CD8-positive, alpha-beta memory T cell (primary cell): ENCODE measurements at regions of chr2 and their contacts with region 1.

Region 1: DNA sequence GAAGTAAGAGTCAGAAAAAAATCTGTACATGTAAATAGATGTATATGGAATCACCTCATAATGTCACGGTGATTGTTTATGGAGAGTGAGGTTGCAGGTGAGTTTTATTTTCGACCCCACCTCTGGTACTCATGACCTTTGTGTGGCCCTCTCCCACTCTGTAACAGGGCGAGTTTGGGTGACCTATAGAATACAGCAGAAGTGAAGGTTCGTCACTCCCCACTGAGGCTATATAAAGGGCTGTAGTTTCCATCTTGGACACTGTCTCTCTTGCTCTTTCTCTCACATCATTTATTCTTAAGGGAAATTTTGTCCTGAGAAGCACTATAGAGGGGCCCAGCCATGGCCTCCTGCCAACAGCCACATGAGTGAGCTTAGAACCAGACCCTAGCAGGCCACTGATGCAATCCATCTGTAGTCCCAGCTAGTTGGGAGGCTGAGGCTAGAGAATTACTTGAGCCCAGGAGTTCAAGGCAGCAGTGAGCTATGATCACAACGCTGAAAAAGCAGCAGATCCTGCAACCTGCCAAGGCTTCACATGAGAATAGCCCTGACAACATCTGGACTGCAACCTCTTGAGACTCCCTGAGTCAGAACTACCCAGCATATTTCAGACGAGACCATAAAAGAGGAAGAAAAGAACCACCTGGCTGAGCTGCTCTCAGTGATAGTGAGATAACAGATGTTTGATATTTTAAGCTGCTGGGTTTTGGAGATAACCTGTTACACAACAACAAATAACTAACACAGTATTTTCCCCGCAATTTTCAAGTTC is 74.3 kb upstream of the SLC1A4 start:
- DNase-seq: no peak
- H3K4me3 ChIP-seq: no peak overlapping the region
- H3K4me3 Mint-ChIP-seq: no peak overlapping the region
- H3K27ac ChIP-seq: no peak overlapping the region
- H3K27ac Mint-ChIP-seq: peak overlapping the region in 1 of 8 donors; percentile 66
- H3K4me1 ChIP-seq: peaks cover 12% of the 10 kb centered on the region
- H3K4me1 Mint-ChIP-seq: peaks cover 7 to 19% (median 16%) of the 10 kb centered on the region in 3 donors
- H3K27me3 ChIP-seq: no peaks in the 10 kb centered on the region
- H3K27me3 Mint-ChIP-seq: no peaks in the 10 kb centered on the region

Region 2: DNA sequence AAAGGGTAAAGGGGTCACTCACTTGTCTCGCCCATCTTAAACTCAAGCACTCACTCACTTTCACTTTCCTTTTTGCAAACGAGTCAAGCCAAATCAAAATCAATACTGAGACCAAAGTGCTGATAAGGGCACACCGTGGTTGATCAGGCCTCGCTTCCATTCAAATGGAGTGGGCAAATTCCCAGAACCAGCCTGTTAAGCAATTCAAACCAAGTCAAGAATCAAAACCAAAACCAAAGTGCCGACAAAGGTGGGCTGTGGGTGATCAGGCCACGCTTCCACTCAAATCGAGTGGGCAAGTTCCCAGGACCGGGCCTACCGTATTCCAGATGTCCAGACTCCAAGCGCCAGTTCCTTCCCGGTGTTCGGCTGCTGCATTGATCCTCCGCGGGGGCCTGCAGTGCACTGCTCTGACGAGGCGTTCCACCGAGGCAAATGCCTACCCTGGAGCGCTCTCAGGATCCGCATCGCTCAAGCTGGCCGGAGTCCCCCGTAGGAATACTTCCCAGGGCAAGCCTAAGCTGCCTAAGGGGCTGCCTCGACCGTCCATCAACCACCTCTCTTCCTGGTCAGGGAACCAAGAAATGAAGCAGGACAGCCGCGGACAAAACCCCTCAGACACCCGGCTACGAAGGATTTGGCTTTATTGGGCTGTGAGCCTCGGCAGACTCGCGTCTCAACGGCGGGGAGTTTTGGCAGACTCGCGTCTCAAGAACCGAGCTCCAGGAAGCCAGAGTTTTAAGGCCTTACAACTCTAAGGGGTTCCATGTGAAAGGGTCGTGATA is 15.6 kb before region 1 on chr2:
- CTCF ChIA-PET with region 1: no interaction called
- POLR2A ChIA-PET with region 1: no interaction called
- DNase-seq: no peak
- H3K4me3 ChIP-seq: no peak overlapping the region
- H3K4me3 Mint-ChIP-seq: peak overlapping the region in 6 of 7 donors; percentile 32 to 79 (median 45)
- H3K27ac ChIP-seq: no peak overlapping the region
- H3K27ac Mint-ChIP-seq: peak overlapping the region in 3 of 8 donors; percentile 5 to 69 (median 60)
- H3K4me1 ChIP-seq: no peaks in the 10 kb centered on the region
- H3K4me1 Mint-ChIP-seq: peaks cover 7 to 8% (median 8%) of the 10 kb centered on the region in 3 donors
- H3K27me3 ChIP-seq: no peaks in the 10 kb centered on the region
- H3K27me3 Mint-ChIP-seq: peaks cover 2 to 9% of the 10 kb centered on the region in 2 donors

Region 3: DNA sequence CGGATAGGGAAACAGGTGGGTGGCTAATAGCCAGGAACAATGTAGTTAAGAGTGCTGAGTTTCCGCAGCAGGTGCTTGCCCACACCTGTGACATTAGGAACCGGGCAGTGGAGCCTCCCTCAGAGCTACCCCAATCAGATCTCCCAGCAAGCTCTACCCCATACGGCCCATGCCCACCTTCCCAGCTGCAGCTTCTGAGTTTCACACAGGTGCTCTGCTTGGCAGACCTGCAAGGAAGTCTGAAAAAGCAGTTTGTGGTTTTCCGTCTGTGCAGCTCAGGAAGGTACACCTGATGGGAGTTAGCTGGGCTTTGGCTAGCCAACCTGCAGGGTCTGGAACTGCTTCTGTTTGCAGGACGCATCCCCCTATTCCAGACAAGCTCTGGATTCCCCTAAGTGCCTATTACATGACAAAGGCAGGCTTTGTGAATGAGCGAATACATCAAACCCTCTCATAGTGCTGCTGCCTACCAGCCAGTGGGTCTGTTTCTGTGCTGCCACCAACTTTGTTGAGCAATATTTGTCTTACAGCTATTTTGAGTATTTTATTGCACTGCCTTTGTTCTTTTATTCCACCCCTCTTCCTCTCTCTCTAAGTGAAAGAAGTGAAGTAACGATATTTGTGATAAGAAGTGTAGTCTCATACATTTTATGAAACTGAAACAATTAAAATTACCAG is 116.6 kb after region 1 on chr2:
- CTCF ChIA-PET with region 1: interaction called, 22 read pairs
- POLR2A ChIA-PET with region 1: interaction called, 3 read pairs
- DNase-seq: peak in 1 of 5 donors; percentile 24
- H3K4me3 ChIP-seq: peak overlapping the region; percentile 22
- H3K4me3 Mint-ChIP-seq: peak overlapping the region in 5 of 7 donors; percentile 18 to 70 (median 66)
- H3K27ac ChIP-seq: no peak overlapping the region
- H3K27ac Mint-ChIP-seq: peak overlapping the region in 7 of 8 donors; percentile 13 to 88 (median 49)
- H3K4me1 ChIP-seq: peaks cover 26% of the 10 kb centered on the region
- H3K4me1 Mint-ChIP-seq: peaks cover 21 to 25% (median 23%) of the 10 kb centered on the region in 3 donors
- H3K27me3 ChIP-seq: no peaks in the 10 kb centered on the region
- H3K27me3 Mint-ChIP-seq: no peaks in the 10 kb centered on the region

Region 4: GRCh38 chr2:65040400-65041261 is 125.7 kb after region 1 on chr2:
- CTCF ChIA-PET with region 1: interaction called, 32 read pairs
- POLR2A ChIA-PET with region 1: no interaction called
- DNase-seq: peak; percentile 61 to 80 (median 66)
- H3K4me3 ChIP-seq: no peak overlapping the region
- H3K4me3 Mint-ChIP-seq: peak overlapping the region in 4 of 7 donors; percentile 32 to 55 (median 44)
- H3K27ac ChIP-seq: no peak overlapping the region
- H3K27ac Mint-ChIP-seq: peak overlapping the region in 2 of 8 donors; percentile 38 to 39
- H3K4me1 ChIP-seq: peaks cover 4% of the 10 kb centered on the region
- H3K4me1 Mint-ChIP-seq: peaks cover 7 to 12% (median 9%) of the 10 kb centered on the region in 3 donors
- H3K27me3 ChIP-seq: no peaks in the 10 kb centered on the region
- H3K27me3 Mint-ChIP-seq: no peaks in the 10 kb centered on the region

Region 5: DNA sequence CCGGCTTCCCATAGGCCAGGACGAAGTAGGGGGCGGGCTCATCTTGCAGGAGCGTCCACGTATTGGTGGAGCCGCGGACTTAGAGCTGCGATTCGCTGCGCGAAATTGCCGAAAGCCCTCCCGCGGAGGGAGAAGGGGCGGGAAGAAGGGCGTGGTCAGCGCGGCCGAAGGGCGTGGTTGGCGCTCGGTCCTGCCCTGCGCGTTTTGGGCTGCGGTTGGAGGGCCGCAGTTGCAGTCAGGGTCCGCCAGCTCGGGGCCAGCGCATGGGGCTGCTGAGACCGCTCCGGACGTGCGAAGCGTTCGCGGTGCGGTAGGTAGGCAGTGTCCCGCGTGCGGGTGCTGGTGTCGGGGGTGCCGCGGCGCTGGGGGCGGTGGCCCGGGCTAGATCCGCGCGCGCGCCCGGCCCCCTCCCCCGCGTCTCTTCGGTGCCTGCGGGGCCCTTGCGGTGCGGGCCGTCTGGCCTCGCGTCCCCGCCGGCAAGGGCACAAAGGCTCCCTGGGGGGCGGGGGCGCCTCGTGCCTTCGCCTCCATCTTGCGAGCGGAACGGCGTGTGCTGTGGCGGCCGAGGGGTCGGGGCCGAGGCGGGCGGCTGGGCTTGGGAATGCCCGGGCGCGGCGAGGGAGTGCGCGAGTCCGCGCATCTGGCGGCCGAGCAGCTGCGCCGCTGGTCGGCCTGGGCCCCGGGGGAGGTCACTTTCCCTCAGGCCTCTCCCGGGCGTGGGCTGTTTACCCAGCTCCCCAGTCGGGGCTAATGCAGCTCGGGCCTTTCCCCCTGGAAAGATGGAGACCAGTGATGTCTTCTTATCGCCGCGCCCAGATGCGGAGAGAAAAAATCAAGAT is 141.5 kb after region 1 on chr2 and contains the start of gene CEP68:
- CTCF ChIA-PET with region 1: interaction called, 25 read pairs
- POLR2A ChIA-PET with region 1: no interaction called
- DNase-seq: peak; percentile 93 to 97 (median 95)
- H3K4me3 ChIP-seq: peak within 1 kb of the TSS; percentile 65
- H3K4me3 Mint-ChIP-seq: peak within 1 kb of the TSS; percentile 85 to 98 (median 97)
- H3K27ac ChIP-seq: peak within 1 kb of the TSS; percentile 55
- H3K27ac Mint-ChIP-seq: peak within 1 kb of the TSS; percentile 71 to 96 (median 94)
- H3K4me1 ChIP-seq: peaks cover 61% of the 10 kb centered on the region
- H3K4me1 Mint-ChIP-seq: peaks cover 53 to 76% (median 72%) of the 10 kb centered on the region in 3 donors
- H3K27me3 ChIP-seq: no peaks in the 10 kb centered on the region
- H3K27me3 Mint-ChIP-seq: peaks cover 0 to 1% of the 10 kb centered on the region in 2 donors
- total RNA-seq, gene CEP68: 7.2 to 7.4 TPM

Region 6: DNA sequence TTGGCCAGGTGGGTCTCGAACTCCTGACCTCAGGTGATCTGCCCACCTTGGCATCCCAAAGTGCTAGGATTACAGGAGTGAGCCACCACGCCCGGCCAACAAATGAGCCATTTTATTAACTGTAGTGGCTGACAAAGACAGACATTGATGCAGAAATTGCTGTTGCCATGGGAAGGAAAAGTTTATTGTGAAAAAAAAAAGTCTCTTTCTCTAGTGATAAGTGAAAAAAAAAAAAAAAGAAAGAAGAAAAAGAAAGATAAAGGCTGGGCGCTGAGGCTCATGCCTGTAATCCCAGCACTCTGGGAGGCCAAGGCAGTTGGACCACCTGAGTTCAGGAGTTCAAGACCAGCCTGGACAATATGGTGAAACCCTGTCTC is 254.8 kb after region 1 on chr2:
- CTCF ChIA-PET with region 1: interaction called, 44 read pairs
- POLR2A ChIA-PET with region 1: no interaction called
- DNase-seq: no peak
- H3K4me3 ChIP-seq: no peak overlapping the region
- H3K4me3 Mint-ChIP-seq: no peak overlapping the region
- H3K27ac ChIP-seq: no peak overlapping the region
- H3K27ac Mint-ChIP-seq: no peak overlapping the region
- H3K4me1 ChIP-seq: no peaks in the 10 kb centered on the region
- H3K4me1 Mint-ChIP-seq: no peaks in the 10 kb centered on the region
- H3K27me3 ChIP-seq: no peaks in the 10 kb centered on the region
- H3K27me3 Mint-ChIP-seq: peaks cover 0 to 8% of the 10 kb centered on the region in 2 donors